A673 (cell line): ENCODE measurements at regions of chr13 and their contacts with region 1.

Region 1: DNA sequence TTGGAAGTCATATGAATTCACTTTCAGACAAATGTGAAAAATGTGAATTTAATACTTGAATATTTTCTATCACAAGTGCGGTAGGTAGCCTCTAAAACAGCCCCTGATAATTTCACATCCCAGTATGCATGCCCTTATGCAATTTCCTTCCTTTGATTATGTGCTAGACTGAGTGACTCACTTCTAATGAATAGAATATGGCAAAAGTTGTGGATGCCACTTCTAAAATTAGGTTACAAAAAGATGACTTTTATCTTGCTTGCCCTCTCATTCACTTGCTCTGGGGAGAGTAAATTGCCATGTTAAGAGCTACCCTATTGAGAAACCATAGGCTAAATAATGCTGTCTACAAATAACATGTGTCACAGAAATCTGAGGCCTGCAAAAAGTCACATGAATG is 402.5 kb upstream of the PCDH9 start:
- DNase-seq: peak; percentile 92
- H3K4me3 ChIP-seq: no peak overlapping the region
- H3K27ac ChIP-seq: peak overlapping the region; percentile 13
- H3K4me1 ChIP-seq: peaks cover 28% of the 10 kb centered on the region
- H3K27me3 ChIP-seq: no peaks in the 10 kb centered on the region
- CTCF ChIP-seq: no peak

Region 2: DNA sequence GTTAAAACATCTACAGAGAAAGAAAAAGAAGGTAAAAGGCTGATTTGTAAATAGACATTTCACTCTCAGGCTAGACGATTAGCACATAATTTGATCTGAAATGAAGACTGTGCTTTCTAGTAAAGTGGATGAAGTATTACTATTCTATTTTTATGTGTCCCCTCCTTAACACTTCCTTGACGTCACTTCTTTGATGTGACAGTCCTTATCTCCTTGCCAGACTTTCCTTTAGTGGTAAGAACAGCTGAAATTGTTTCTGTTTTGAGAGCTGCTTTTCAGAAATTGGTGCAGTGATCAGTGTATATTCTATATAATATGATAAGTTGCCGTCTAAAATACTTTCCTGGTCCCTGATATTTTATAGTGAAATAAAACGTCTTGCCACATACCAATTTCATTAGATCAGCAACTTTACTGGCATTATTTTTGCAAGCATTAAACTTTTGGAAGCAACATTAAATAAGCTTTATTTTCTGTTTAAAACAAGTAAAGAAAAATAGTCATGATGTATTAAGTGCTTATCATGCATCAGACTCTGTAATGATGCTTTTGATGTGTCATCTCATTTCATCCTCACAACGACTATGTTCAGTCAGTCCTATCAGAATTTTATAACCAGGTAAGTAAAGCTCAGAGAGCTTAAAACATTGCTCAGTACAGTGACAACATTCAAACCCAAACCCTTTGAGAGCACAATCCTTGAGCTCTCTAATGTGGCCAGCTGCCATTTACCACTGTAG is 192.2 kb before region 1 on chr13:
- CTCF ChIA-PET with region 1: no interaction called
- POLR2A ChIA-PET with region 1: no interaction called
- intact Hi-C with region 1: no loop called
- DNase-seq: no peak
- H3K4me3 ChIP-seq: no peak overlapping the region
- H3K27ac ChIP-seq: no peak overlapping the region
- H3K4me1 ChIP-seq: no peaks in the 10 kb centered on the region
- H3K27me3 ChIP-seq: no peaks in the 10 kb centered on the region
- CTCF ChIP-seq: no peak

Region 3: GRCh38 chr13:67736646-67737420 is 104.2 kb after region 1 on chr13:
- CTCF ChIA-PET with region 1: no interaction called
- POLR2A ChIA-PET with region 1: no interaction called
- intact Hi-C with region 1: loop called (anchors 5 kb)
- DNase-seq: peak; percentile 94
- H3K4me3 ChIP-seq: no peak overlapping the region
- H3K27ac ChIP-seq: no peak overlapping the region
- H3K4me1 ChIP-seq: peaks cover 12% of the 10 kb centered on the region
- H3K27me3 ChIP-seq: no peaks in the 10 kb centered on the region
- CTCF ChIP-seq: peak; percentile 71

Region 4: GRCh38 chr13:68350554-68350953 is 718.0 kb after region 1 on chr13:
- CTCF ChIA-PET with region 1: no interaction called
- POLR2A ChIA-PET with region 1: no interaction called
- intact Hi-C with region 1: no loop called
- DNase-seq: no peak
- H3K4me3 ChIP-seq: no peak overlapping the region
- H3K27ac ChIP-seq: no peak overlapping the region
- H3K4me1 ChIP-seq: no peaks in the 10 kb centered on the region
- H3K27me3 ChIP-seq: no peaks in the 10 kb centered on the region
- CTCF ChIP-seq: no peak